ENCODE measurements at regions of chr9 and their contacts with region 1.

Region 1: GRCh38 chr9:94014065-94014654 is 59.0 kb upstream of the BARX1 start:
- DNase-seq: peak; percentile 31 to 39
- ATAC-seq: peak; percentile 64 to 82; a peak in 3 of 6 replicates
- H3K4me3 ChIP-seq: no peak overlapping the region
- H3K27ac ChIP-seq: no peak overlapping the region
- H3K4me1 ChIP-seq: no peaks in the 10 kb centered on the region
- CTCF ChIP-seq: peak; percentile 66
- EP300 ChIP-seq: no peak
- POLR2A ChIP-seq: no peak
- RAD21 ChIP-seq: peak; percentile 57 to 60

Region 2: GRCh38 chr9:93682232-93682968 is 331.8 kb before region 1 on chr9:
- CTCF ChIA-PET with region 1: interaction called, 16 read pairs
- POLR2A ChIA-PET with region 1: no interaction called
- DNase-seq: peak; percentile 62 to 66
- ATAC-seq: peak; percentile 63 to 83
- H3K4me3 ChIP-seq: no peak overlapping the region
- H3K27ac ChIP-seq: no peak overlapping the region
- H3K4me1 ChIP-seq: no peaks in the 10 kb centered on the region
- CTCF ChIP-seq: peak; percentile 74
- EP300 ChIP-seq: no peak
- POLR2A ChIP-seq: no peak
- RAD21 ChIP-seq: peak; percentile 87 to 90

Region 3: GRCh38 chr9:94002316-94003140 is 11.6 kb before region 1 on chr9:
- CTCF ChIA-PET with region 1: interaction called, 46 read pairs
- POLR2A ChIA-PET with region 1: no interaction called
- DNase-seq: peak; percentile 20 to 57
- ATAC-seq: peak in 1 of 2 experiments; percentile 78; a peak in 4 of 6 replicates
- H3K4me3 ChIP-seq: no peak overlapping the region
- H3K27ac ChIP-seq: no peak overlapping the region
- H3K4me1 ChIP-seq: no peaks in the 10 kb centered on the region
- CTCF ChIP-seq: peak; percentile 48
- EP300 ChIP-seq: no peak
- POLR2A ChIP-seq: no peak
- RAD21 ChIP-seq: peak; percentile 49 to 59

Region 4: GRCh38 chr9:94065535-94065961 is 51.4 kb after region 1 on chr9:
- CTCF ChIA-PET with region 1: interaction called, 20 read pairs
- POLR2A ChIA-PET with region 1: no interaction called
- DNase-seq: peak; percentile 34 to 84
- ATAC-seq: peak; percentile 68 to 87
- H3K4me3 ChIP-seq: no peak overlapping the region
- H3K27ac ChIP-seq: 0 out of 6 replicates have a peak overlapping the region, but pooled peaks of 1 of the 2 experiments have one; percentile 23
- H3K4me1 ChIP-seq: no peaks in the 10 kb centered on the region
- CTCF ChIP-seq: peak; percentile 85
- EP300 ChIP-seq: no peak
- POLR2A ChIP-seq: no peak
- RAD21 ChIP-seq: peak; percentile 81 to 82

Region 5: DNA sequence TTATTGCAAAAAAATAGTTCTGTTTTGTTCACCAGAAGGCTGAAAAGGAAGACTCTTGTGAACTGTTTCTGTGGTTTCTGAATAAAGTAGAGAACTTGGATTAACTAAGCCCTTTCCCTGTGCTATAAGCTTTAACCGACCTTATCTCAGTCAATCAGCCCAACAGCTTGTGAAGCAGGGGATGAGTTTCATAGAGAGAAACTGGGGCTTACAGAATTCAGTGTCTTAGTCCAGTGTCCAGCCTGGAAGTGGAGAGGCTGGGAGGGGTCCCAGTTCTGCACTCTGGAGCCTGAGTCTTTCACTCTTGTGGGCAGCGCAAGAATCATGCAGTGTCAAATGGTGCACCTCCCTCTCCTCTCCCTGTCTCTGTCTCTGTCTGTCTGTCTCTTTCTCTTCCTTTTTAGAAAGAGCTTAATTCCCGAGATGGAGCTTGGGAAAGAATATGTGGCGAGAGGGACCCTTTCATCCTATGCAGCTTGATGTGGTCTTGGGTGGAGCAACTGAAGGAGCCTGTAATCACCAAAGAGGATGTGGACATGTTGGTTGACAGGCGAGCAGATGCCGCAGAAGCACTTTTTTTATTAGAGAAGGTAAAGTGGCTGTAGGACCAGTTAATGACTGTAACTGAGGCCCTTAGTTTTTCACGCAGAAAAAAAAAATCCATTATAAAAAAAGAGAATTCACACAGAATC is 87.1 kb after region 1 on chr9:
- CTCF ChIA-PET with region 1: no interaction called
- POLR2A ChIA-PET with region 1: no interaction called
- DNase-seq: no peak
- ATAC-seq: no peak
- H3K4me3 ChIP-seq: no peak overlapping the region
- H3K27ac ChIP-seq: no peak overlapping the region
- H3K4me1 ChIP-seq: peaks cover 12% of the 10 kb centered on the region; the same call in 2 of the 3 replicates
- CTCF ChIP-seq: no peak
- EP300 ChIP-seq: no peak
- POLR2A ChIP-seq: no peak
- RAD21 ChIP-seq: no peak

Region 6: GRCh38 chr9:94199776-94200175 is 185.6 kb after region 1 on chr9:
- CTCF ChIA-PET with region 1: interaction called, 15 read pairs
- POLR2A ChIA-PET with region 1: no interaction called
- DNase-seq: no peak
- ATAC-seq: no peak
- H3K4me3 ChIP-seq: no peak overlapping the region
- H3K27ac ChIP-seq: no peak overlapping the region
- H3K4me1 ChIP-seq: no peaks in the 10 kb centered on the region
- CTCF ChIP-seq: no peak
- EP300 ChIP-seq: no peak
- POLR2A ChIP-seq: no peak
- RAD21 ChIP-seq: no peak

Measured in A549 (cell line).